Cardiac septum (tissue), 1 donor: ENCODE measurements at regions of chr5 and their contacts with region 1.

Region 1: GRCh38 chr5:113294311-113295110 is 140.3 kb downstream of the TSSK1B start:
- DNase-seq: peak; percentile 95

Region 2: DNA sequence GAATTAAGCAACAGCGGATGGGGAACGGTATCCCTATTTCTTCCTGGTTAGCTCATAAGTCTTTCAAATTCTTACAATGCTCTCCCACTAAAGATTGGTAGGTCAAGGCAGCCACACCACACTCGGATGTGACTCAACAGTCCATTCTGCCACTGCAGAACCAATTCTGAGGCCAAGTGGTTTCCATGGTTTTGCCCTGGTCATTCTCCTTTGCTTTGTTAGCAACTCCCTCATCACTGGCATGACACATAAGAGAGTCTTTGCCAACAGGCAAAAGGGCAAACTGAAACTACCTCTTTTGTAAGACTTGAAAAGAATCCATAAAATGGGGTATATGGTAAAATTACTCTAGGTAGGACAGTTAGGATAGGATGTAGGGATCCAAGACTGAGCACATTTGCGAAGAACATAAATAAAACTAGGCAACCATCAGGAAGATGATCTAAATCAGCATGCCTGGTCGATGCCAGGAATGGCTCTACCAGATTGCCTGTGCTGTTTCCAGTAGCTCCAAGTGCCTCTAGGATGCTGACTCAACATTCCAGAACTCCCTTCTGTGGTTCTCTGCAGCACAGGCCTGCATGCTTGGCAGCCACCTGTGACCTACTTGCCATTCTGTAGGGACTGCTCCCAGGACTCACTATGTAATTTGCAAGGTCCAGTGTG is 212.5 kb before region 1 on chr5:
- intact Hi-C with region 1: loop called (anchors 10 kb)
- DNase-seq: no peak

Region 3: DNA sequence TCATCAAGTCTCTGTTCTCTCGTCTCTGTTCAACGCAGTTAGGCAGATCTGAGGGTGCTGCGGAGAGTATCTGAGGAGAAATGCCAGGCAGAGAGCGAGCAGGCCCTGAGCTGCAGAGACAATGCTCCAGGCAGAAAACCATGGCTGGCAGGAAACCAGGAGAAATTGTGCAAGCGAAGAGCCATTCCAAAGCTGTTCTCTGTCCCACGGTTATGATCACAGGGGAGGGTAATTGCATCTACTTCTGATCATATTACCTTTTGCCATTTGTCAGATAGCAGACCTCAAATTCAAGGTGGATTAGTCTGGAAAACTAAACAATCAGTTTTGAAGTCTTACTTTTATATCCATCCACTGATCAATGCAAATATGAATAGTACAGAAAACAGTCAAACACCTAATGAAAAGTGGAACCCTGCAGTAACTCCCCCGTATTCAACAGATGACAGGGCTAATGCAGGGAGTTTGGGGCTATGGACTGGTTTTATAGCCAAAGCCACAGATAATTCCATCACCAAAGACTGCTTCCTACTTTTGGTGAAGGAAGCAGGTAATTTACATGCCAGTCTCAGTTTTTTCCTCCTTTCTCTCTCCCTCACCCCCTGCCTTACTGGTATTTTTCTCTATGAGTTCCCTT is 89.9 kb before region 1 on chr5:
- intact Hi-C with region 1: loop called (anchors 2 kb)
- DNase-seq: no peak

Region 4: GRCh38 chr5:113255579-113256386 is 38.7 kb before region 1 on chr5:
- intact Hi-C with region 1: loop called (anchors 5 kb)
- DNase-seq: no peak

Region 5: GRCh38 chr5:113330533-113331208 is 36.2 kb after region 1 on chr5:
- intact Hi-C with region 1: loop called (anchors 5 kb)
- DNase-seq: no peak